Left ventricle myocardium inferior (tissue), 1 donor: ENCODE measurements at regions of chr7 and their contacts with region 1.

Region 1: GRCh38 chr7:106744563-106745091 is 83.7 kb upstream of the CCDC71L start:
- DNase-seq: no peak
- H3K4me3 ChIP-seq: no peak overlapping the region
- H3K27ac ChIP-seq: no peak overlapping the region
- H3K4me1 ChIP-seq: peaks cover 10% of the 10 kb centered on the region
- H3K27me3 ChIP-seq: no peaks in the 10 kb centered on the region
- CTCF ChIP-seq: no peak

Region 2: DNA sequence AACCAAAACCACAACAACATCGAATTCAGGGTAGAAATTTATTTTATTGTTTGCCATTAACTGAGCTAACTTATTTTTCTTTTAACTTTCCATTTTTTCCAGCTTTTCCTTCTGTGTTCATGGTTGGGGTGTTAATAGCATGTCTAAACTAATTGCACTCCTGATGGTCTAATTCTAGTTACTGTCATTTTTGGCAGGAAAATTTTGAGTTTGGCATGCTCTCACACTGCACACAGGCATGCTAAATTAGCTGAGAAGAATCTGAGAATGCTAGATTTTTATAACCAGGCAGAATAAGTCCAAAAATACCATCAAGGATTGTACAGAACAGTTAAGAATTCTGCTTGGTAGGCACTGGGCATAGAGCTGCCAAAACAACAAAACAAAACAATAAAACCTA is 574.4 kb before region 1 on chr7:
- intact Hi-C with region 1: loop called (anchors 5 kb)
- DNase-seq: no peak
- H3K4me3 ChIP-seq: no peak overlapping the region
- H3K27ac ChIP-seq: no peak overlapping the region
- H3K4me1 ChIP-seq: peaks cover 19% of the 10 kb centered on the region
- H3K27me3 ChIP-seq: no peaks in the 10 kb centered on the region
- CTCF ChIP-seq: no peak